Naive thymus-derived CD4-positive, alpha-beta T cell (primary cell): ENCODE measurements at regions of chr7 and their contacts with region 1.

Region 1: GRCh38 chr7:155298834-155299534 is 1.3 kb downstream of the INSIG1 start:
- DNase-seq: peak; percentile 86 to 98 (median 98)
- ATAC-seq: peak; percentile 81
- H3K4me3 ChIP-seq: peak overlapping the region; percentile 73
- H3K4me3 Mint-ChIP-seq: peak overlapping the region; percentile 88 to 97 (median 93)
- H3K27ac ChIP-seq: peak overlapping the region; percentile 78
- H3K27ac Mint-ChIP-seq: peak overlapping the region; percentile 91 to 99 (median 97)
- H3K4me1 ChIP-seq: peaks cover 22 to 37% of the 10 kb centered on the region in 2 donors
- H3K4me1 Mint-ChIP-seq: peaks cover 23 to 62% (median 42%) of the 10 kb centered on the region in 7 donors
- H3K27me3 ChIP-seq: no peaks in the 10 kb centered on the region
- H3K27me3 Mint-ChIP-seq: peaks cover 0 to 3% (median 0%) of the 10 kb centered on the region in 5 donors

Region 2: DNA sequence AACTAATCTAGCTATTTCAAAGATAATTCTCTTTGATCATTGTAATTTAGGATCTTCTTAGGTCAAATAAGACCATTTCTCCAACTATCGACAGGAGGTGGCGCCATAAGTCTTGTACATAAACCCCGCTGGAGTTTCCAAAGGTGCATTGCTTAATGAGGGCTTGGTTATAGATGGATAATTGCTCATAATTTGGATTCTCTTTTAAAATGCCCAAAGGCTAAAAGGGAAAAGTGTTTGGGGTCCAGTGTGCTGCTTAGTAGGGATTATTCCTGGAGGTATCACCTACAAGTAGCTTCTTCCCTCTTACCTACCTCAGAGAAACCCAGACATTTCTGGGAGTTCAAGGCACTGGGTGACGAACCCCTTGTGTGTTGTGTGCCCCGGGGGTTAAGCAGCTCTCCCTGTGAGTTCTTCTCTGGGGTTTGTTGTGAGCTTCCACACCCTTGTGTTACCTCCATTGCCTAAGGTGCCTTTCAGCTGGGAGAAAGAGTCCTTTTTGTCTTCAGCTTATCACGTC is 371.3 kb before region 1 on chr7:
- CTCF ChIA-PET with region 1: no interaction called
- POLR2A ChIA-PET with region 1: interaction called, 17 read pairs
- intact Hi-C with region 1: loop called (anchors 1 kb)
- DNase-seq: peak; percentile 19 to 82 (median 73)
- ATAC-seq: peak; percentile 76
- H3K4me3 ChIP-seq: peak overlapping the region; percentile 81
- H3K4me3 Mint-ChIP-seq: peak overlapping the region; percentile 92 to 100 (median 94)
- H3K27ac ChIP-seq: peak overlapping the region; percentile 90
- H3K27ac Mint-ChIP-seq: peak overlapping the region; percentile 95 to 99 (median 98)
- H3K4me1 ChIP-seq: peaks cover 13 to 17% of the 10 kb centered on the region in 2 donors
- H3K4me1 Mint-ChIP-seq: peaks cover 14 to 40% (median 34%) of the 10 kb centered on the region in 7 donors
- H3K27me3 ChIP-seq: no peaks in the 10 kb centered on the region
- H3K27me3 Mint-ChIP-seq: peaks cover 0 to 16% (median 0%) of the 10 kb centered on the region in 5 donors

Region 3: GRCh38 chr7:155090684-155091083 is 208.3 kb before region 1 on chr7:
- CTCF ChIA-PET with region 1: no interaction called
- POLR2A ChIA-PET with region 1: no interaction called
- intact Hi-C with region 1: no loop called
- DNase-seq: peak in 1 of 9 donors; percentile 27
- ATAC-seq: no peak
- H3K4me3 ChIP-seq: no peak overlapping the region
- H3K4me3 Mint-ChIP-seq: no peak overlapping the region
- H3K27ac ChIP-seq: no peak overlapping the region
- H3K27ac Mint-ChIP-seq: peak overlapping the region in 1 of 9 donors; percentile 31
- H3K4me1 ChIP-seq: no peaks in the 10 kb centered on the region
- H3K4me1 Mint-ChIP-seq: peaks cover 0 to 37% (median 0%) of the 10 kb centered on the region in 7 donors
- H3K27me3 ChIP-seq: no peaks in the 10 kb centered on the region
- H3K27me3 Mint-ChIP-seq: peaks cover 10 to 47% (median 31%) of the 10 kb centered on the region in 5 donors

Region 4: GRCh38 chr7:155205368-155206317 is 93.3 kb before region 1 on chr7:
- CTCF ChIA-PET with region 1: interaction called, 5 read pairs
- POLR2A ChIA-PET with region 1: interaction called, 50 read pairs
- intact Hi-C with region 1: loop called (anchors 1 kb)
- DNase-seq: peak; percentile 68 to 90 (median 79)
- ATAC-seq: peak; percentile 90
- H3K4me3 ChIP-seq: peak overlapping the region; percentile 52
- H3K4me3 Mint-ChIP-seq: peak overlapping the region; percentile 70 to 94 (median 86)
- H3K27ac ChIP-seq: peak overlapping the region; percentile 8
- H3K27ac Mint-ChIP-seq: peak overlapping the region; percentile 56 to 99 (median 86)
- H3K4me1 ChIP-seq: peaks cover 8 to 11% of the 10 kb centered on the region in 2 donors
- H3K4me1 Mint-ChIP-seq: peaks cover 19 to 30% (median 21%) of the 10 kb centered on the region in 7 donors
- H3K27me3 ChIP-seq: no peaks in the 10 kb centered on the region
- H3K27me3 Mint-ChIP-seq: no peaks in the 10 kb centered on the region

Region 5: GRCh38 chr7:155338632-155339320 is 39.8 kb after region 1 on chr7:
- CTCF ChIA-PET with region 1: interaction called, 8 read pairs
- POLR2A ChIA-PET with region 1: interaction called, 5 read pairs
- intact Hi-C with region 1: loop called in 1 of 2 experiments (anchors 1 kb)
- DNase-seq: peak in 7 of 9 donors; percentile 34 to 56 (median 50)
- ATAC-seq: peak; percentile 81
- H3K4me3 ChIP-seq: peak overlapping the region; percentile 61
- H3K4me3 Mint-ChIP-seq: peak overlapping the region; percentile 63 to 84 (median 78)
- H3K27ac ChIP-seq: no peak overlapping the region
- H3K27ac Mint-ChIP-seq: peak overlapping the region; percentile 9 to 87 (median 40)
- H3K4me1 ChIP-seq: peaks cover 7 to 14% of the 10 kb centered on the region in 2 donors
- H3K4me1 Mint-ChIP-seq: peaks cover 6 to 26% (median 15%) of the 10 kb centered on the region in 7 donors
- H3K27me3 ChIP-seq: peaks cover 0 to 6% of the 10 kb centered on the region in 2 donors
- H3K27me3 Mint-ChIP-seq: peaks cover 0 to 33% (median 0%) of the 10 kb centered on the region in 5 donors

Region 6: DNA sequence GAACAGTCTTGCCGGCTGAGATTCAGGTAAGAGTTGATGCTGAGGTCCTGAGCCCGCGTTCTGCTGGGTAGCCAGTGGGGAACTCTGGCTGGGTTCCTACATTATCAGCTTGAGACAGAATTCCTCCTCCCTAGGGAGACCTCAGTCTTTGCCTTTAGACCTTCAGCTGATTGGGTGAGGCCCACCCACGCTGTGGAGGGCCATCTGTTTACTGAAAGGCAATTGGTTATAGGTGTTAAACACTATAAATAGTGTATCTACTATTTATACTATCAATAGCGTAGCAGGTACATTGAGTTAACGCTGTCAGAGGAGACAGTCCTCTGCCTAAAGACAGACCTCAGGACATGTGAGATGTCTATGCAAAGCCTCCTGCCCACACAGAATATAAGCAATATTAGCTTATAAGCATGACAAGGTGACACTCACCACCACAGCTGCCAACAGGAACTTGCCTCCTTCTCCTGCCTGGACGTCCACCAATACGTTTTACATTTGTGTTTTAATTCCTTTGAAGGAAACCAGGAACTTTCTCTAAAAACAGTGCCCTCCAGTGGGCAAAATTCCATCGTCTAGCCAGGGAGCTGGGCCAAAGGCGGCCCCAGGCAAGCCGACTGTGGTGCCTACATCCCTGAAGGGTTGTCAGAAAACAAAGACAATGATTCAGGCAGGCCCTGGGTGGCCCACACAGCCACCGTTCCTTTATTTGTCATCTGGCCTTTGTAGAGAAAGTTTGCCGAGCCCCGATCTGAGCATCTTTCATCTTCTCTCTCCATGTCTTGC is 57.5 kb after region 1 on chr7:
- CTCF ChIA-PET with region 1: no interaction called
- POLR2A ChIA-PET with region 1: no interaction called
- intact Hi-C with region 1: no loop called
- DNase-seq: no peak
- ATAC-seq: no peak
- H3K4me3 ChIP-seq: no peak overlapping the region
- H3K4me3 Mint-ChIP-seq: no peak overlapping the region
- H3K27ac ChIP-seq: no peak overlapping the region
- H3K27ac Mint-ChIP-seq: peak overlapping the region in 1 of 9 donors; percentile 16
- H3K4me1 ChIP-seq: no peaks in the 10 kb centered on the region
- H3K4me1 Mint-ChIP-seq: peaks cover 0 to 4% (median 0%) of the 10 kb centered on the region in 7 donors
- H3K27me3 ChIP-seq: no peaks in the 10 kb centered on the region
- H3K27me3 Mint-ChIP-seq: peaks cover 6 to 36% (median 12%) of the 10 kb centered on the region in 5 donors

Region 7: DNA sequence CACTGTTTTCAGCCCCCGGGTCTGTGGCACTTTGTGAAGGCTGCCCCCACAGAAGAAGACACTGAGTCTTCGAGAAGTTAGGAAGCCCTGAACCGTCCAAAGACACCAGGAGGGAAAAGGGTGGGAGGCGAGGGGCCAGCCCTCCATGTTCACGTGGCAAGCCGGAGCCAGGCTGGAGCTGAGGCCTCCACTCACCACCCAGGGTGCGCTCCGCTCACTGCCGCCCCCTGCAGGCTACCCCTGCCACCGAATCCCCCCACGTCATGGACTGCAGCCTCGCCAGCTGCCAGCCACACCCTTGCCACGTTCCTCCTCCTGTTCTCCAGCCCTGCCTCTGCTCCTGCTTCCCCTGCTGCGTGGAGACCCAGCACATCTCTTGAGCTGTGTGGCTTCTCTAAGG is 100.0 kb after region 1 on chr7:
- CTCF ChIA-PET with region 1: no interaction called
- POLR2A ChIA-PET with region 1: no interaction called
- intact Hi-C with region 1: no loop called
- DNase-seq: no peak
- ATAC-seq: no peak
- H3K4me3 ChIP-seq: no peak overlapping the region
- H3K4me3 Mint-ChIP-seq: no peak overlapping the region
- H3K27ac ChIP-seq: no peak overlapping the region
- H3K27ac Mint-ChIP-seq: no peak overlapping the region
- H3K4me1 ChIP-seq: no peaks in the 10 kb centered on the region
- H3K4me1 Mint-ChIP-seq: peaks cover 0 to 3% (median 0%) of the 10 kb centered on the region in 7 donors
- H3K27me3 ChIP-seq: no peaks in the 10 kb centered on the region
- H3K27me3 Mint-ChIP-seq: peaks cover 4 to 66% (median 25%) of the 10 kb centered on the region in 5 donors

Region 8: DNA sequence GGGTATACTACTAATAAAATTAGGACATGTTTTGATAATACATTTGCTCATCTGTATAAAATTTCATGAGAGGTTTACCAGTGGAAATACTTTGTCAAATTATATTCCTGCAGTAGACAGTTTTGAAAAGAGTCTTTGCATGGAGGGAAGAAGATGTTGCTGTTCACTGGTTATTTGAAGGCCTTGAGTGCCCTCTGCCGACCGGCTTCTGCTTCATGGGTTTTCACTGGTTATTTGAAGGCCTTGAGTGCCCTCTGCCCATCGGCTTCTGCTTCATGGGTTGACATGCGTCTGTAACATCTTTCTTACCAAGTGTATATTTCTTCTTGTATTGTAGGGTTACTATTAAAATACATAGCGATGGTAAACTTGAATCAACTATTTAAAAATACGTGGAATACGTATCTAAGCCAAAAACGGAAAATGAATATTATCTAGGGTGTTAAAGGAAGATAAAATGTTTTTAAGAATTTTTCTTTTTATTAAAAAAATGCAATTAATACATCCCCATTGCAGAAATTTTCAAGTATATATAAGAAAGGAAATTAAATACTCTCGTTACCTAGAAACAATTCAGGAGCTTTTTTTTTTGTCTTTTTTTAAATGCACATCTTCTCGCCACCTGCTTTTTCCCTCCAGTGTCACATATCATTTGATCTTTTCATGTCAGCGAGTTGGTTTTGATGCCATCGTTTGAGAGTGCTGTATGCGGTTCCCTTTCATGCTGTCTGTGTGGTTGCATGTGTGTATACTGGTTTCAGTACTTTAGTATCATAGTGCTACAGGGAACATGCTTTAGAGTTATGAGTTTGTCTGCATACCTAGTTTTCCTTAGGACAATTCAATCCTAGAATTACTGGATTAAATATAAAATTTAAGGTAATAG is 439.9 kb after region 1 on chr7:
- CTCF ChIA-PET with region 1: no interaction called
- POLR2A ChIA-PET with region 1: no interaction called
- intact Hi-C with region 1: loop called in 1 of 2 experiments (anchors 2 kb)
- DNase-seq: peak; percentile 27 to 85 (median 77)
- ATAC-seq: peak; percentile 93
- H3K4me3 ChIP-seq: no peak overlapping the region
- H3K4me3 Mint-ChIP-seq: peak overlapping the region in 9 of 10 donors; percentile 15 to 71 (median 62)
- H3K27ac ChIP-seq: peak overlapping the region; percentile 30
- H3K27ac Mint-ChIP-seq: peak overlapping the region; percentile 24 to 97 (median 87)
- H3K4me1 ChIP-seq: peaks cover 0 to 12% of the 10 kb centered on the region in 2 donors
- H3K4me1 Mint-ChIP-seq: peaks cover 17 to 71% (median 49%) of the 10 kb centered on the region in 7 donors
- H3K27me3 ChIP-seq: no peaks in the 10 kb centered on the region
- H3K27me3 Mint-ChIP-seq: no peaks in the 10 kb centered on the region

Region 9: DNA sequence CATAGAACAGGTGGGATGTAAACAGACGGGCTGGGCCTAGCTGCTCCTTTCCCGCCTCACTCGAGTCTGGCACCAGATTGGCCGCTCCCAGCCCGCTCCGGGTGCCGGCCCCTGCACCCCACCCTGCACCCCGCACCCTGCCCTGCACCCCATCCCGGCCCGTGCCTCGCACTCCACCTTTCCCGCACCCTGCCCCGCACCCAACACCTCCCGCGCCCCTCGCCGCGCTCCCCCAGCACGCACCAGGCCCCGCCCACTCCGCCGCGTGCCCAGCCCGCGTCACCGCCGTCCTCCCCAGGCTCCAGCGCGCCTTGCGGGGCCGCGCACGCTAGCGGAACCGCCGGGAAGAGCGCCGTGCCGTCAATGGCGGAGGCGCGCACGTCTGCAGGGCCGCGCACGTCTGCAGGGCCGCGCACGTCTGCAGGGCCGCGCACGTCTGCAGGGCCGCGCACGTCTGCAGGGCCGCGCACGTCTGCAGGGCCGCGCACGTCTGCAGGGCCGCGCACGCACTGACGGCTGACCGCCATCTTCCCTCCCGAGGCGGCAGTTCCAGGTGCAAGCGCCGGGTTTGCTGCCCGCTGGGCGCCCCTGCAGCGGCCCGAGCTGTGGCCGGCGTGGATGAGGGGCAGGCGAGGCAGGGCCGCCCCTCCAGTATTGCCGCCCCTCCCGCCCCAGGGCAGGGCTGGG is 1839.6 kb after region 1 on chr7 and contains the start of gene UBE3C:
- CTCF ChIA-PET with region 1: no interaction called
- POLR2A ChIA-PET with region 1: no interaction called
- intact Hi-C with region 1: loop called in 1 of 2 experiments (anchors 1 kb)
- DNase-seq: peak; percentile 88 to 96 (median 93)
- ATAC-seq: peak; percentile 91
- H3K4me3 ChIP-seq: peak within 1 kb of the TSS; percentile 82
- H3K4me3 Mint-ChIP-seq: peak within 1 kb of the TSS; percentile 77 to 93 (median 84)
- H3K27ac ChIP-seq: peak within 1 kb of the TSS; percentile 92
- H3K27ac Mint-ChIP-seq: peak within 1 kb of the TSS; percentile 76 to 99 (median 93)
- H3K4me1 ChIP-seq: peaks cover 35 to 43% of the 10 kb centered on the region in 2 donors
- H3K4me1 Mint-ChIP-seq: peaks cover 26 to 45% (median 42%) of the 10 kb centered on the region in 7 donors
- H3K27me3 ChIP-seq: no peaks in the 10 kb centered on the region
- H3K27me3 Mint-ChIP-seq: peaks cover 0 to 2% (median 0%) of the 10 kb centered on the region in 5 donors
- total RNA-seq, gene UBE3C: 41.6 to 64.6 (median 54.9) TPM